ENCODE measurements at regions of chr5 and their contacts with region 1.

Region 1: DNA sequence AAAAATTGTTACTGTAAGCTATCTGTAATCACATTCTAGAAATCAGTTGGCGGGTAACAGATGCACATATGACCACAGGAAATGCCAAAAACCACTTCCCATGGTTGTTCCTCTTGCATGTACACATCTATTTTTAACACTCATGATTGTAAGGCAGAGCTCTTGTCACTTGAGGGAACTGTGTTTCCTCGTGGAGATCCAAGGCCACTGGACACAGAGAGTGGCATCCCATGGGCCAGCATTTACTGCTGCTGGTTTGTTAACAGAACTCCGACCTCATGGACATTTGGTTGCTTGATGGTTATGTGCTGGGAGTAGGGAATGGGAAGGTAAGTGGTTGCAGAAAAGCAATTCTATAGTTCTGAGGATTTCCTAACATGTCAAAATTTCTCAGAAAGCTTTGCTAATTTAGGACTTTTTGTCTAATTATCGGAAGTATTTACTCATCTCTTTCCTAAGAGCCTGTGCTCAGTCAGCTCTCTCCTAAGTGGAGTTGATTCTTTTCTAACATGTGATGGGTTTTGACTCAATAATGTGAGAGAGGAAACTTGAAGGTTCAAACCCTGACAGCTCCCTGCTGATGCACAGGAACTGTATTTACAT is 202.0 kb upstream of the NR3C1 start:
- DNase-seq: peak; percentile 83
- H3K4me3 Mint-ChIP-seq: peak overlapping the region; percentile 68
- H3K27ac Mint-ChIP-seq: peak overlapping the region; percentile 94
- H3K4me1 Mint-ChIP-seq: peaks cover 31% of the 10 kb centered on the region
- H3K27me3 Mint-ChIP-seq: peaks cover 4% of the 10 kb centered on the region

Region 2: DNA sequence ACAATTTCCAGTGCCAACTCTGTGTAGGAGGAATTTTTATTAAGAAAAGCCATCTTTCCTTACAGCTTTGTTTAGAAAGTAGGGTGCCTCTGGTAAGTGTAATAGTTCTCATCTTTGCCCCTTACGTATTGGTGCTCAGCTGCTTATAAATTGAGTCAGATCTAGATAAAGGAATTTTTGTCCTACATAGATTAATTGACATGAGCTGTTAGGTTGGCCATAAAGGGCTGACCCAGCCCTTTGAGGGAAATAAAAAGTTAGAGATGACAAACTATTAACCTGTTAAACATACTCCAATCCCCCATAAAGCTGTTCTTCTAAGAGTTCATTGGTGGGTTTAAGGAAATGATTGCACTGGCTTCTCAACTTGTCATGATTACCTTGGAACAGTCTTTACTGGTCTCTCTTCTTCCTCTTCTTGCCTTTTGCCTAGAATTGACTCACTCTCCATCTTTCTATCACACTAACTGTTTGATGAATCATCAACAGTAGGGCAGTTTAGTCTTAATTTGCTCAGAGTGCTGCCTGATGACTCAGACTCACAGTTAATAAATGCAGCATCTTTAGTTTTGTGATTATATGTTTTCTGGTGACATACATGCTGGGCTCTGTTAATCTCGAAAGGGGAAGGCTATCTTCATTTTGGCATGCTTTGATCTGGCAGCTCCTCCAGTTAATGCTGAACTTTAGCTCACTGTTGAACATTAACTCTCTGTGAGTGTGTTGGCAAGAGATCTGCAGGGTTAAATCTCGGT is 783.6 kb before region 1 on chr5:
- intact Hi-C with region 1: loop called (anchors 10 kb)
- DNase-seq: no peak
- H3K4me3 Mint-ChIP-seq: peak overlapping the region; percentile 0
- H3K27ac Mint-ChIP-seq: peak overlapping the region; percentile 71
- H3K4me1 Mint-ChIP-seq: peaks cover 55% of the 10 kb centered on the region
- H3K27me3 Mint-ChIP-seq: no peaks in the 10 kb centered on the region

Region 3: GRCh38 chr5:142994218-142994617 is 611.3 kb before region 1 on chr5:
- intact Hi-C with region 1: no loop called
- DNase-seq: no peak
- H3K4me3 Mint-ChIP-seq: no peak overlapping the region
- H3K27ac Mint-ChIP-seq: no peak overlapping the region
- H3K4me1 Mint-ChIP-seq: peaks cover 25% of the 10 kb centered on the region
- H3K27me3 Mint-ChIP-seq: no peaks in the 10 kb centered on the region

Region 4: DNA sequence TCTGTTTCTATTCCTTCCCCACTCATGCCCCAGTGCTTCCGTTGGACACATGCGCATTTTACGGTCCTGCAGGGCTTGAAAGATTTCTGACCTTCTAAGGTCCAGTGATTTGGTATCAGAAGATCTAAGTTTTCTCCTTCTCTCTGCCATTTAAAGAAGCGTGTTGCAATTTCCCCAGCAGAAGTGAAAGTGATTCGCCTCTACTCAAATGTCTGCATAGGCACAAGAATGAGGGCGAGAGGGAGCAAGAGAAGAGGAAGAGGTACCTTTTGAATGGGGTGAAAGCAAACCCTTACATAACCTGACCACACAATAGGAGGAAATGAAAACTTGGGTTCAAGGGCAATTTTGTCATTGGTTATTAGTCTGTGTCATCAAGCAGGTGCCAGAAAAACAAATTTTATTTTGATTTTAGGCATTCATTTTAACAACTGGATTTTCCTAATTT is 170.3 kb before region 1 on chr5:
- intact Hi-C with region 1: loop called (anchors 1 kb)
- DNase-seq: peak; percentile 79
- H3K4me3 Mint-ChIP-seq: peak overlapping the region; percentile 88
- H3K27ac Mint-ChIP-seq: peak overlapping the region; percentile 92
- H3K4me1 Mint-ChIP-seq: peaks cover 51% of the 10 kb centered on the region
- H3K27me3 Mint-ChIP-seq: no peaks in the 10 kb centered on the region

Region 5: DNA sequence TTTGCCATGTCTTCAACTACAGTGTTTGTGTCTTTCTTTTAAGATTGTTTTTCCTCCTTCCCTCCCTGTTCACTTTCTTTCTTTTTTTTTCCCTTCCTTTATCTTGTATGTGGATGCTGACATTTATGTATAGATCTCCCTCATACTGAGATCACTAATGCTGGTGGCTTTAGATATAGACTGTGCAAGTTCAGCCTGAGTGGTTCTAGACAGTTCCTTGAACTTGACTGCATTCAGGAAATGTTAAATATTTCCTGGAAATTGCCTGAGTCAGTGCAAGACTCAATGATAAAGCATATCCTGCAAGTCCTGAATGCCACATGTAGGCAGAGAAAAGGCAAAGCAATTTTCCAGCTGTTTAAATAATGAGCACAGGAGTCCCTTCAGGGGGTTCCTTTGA is 19.5 kb before region 1 on chr5:
- intact Hi-C with region 1: loop called (anchors 2 kb)
- DNase-seq: peak; percentile 59
- H3K4me3 Mint-ChIP-seq: peak overlapping the region; percentile 44
- H3K27ac Mint-ChIP-seq: peak overlapping the region; percentile 55
- H3K4me1 Mint-ChIP-seq: peaks cover 47% of the 10 kb centered on the region
- H3K27me3 Mint-ChIP-seq: no peaks in the 10 kb centered on the region

Region 6: DNA sequence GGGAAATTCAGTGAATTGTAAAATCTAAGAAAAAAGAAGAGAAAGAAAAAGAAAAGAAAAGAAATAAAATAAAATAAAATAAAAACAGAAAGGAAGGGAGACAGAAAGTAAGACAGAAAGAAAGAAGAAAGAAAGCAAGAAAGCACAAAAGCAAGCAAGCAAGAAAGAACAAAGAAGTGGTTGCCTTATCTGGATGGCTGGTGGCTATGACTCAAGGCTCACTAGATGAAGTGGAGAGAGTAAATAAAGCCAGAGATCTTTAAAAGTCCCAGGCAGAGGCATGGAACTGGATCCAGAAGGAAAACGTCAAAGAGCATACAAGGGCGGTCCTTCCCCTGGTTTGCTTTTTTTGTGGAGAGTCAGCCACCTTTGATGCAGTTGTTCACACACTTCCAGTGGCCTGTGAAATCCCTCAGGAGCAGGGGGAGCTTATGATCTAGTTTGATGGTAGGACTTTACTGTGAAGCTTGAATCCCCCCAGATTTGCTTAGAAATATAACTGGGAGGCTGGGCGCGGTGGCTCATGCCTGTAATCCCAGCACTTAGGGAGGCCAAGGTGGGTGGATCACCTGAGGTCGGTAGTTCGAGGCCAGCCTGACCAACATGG is 29.7 kb after region 1 on chr5:
- intact Hi-C with region 1: no loop called
- DNase-seq: peak; percentile 31
- H3K4me3 Mint-ChIP-seq: no peak overlapping the region
- H3K27ac Mint-ChIP-seq: no peak overlapping the region
- H3K4me1 Mint-ChIP-seq: no peaks in the 10 kb centered on the region
- H3K27me3 Mint-ChIP-seq: no peaks in the 10 kb centered on the region

Region 7: GRCh38 chr5:143665866-143666265 is 60.4 kb after region 1 on chr5:
- intact Hi-C with region 1: no loop called
- DNase-seq: no peak
- H3K4me3 Mint-ChIP-seq: no peak overlapping the region
- H3K27ac Mint-ChIP-seq: no peak overlapping the region
- H3K4me1 Mint-ChIP-seq: no peaks in the 10 kb centered on the region
- H3K27me3 Mint-ChIP-seq: peaks cover 9% of the 10 kb centered on the region

Region 8: GRCh38 chr5:143679777-143680176 is 74.3 kb after region 1 on chr5:
- intact Hi-C with region 1: loop called (anchors 5 kb)
- DNase-seq: no peak
- H3K4me3 Mint-ChIP-seq: no peak overlapping the region
- H3K27ac Mint-ChIP-seq: peak overlapping the region; percentile 72
- H3K4me1 Mint-ChIP-seq: peaks cover 18% of the 10 kb centered on the region
- H3K27me3 Mint-ChIP-seq: peaks cover 4% of the 10 kb centered on the region